Mammary epithelial cell (primary cell): ENCODE measurements at regions of chr16 and their contacts with region 1.

Region 1: DNA sequence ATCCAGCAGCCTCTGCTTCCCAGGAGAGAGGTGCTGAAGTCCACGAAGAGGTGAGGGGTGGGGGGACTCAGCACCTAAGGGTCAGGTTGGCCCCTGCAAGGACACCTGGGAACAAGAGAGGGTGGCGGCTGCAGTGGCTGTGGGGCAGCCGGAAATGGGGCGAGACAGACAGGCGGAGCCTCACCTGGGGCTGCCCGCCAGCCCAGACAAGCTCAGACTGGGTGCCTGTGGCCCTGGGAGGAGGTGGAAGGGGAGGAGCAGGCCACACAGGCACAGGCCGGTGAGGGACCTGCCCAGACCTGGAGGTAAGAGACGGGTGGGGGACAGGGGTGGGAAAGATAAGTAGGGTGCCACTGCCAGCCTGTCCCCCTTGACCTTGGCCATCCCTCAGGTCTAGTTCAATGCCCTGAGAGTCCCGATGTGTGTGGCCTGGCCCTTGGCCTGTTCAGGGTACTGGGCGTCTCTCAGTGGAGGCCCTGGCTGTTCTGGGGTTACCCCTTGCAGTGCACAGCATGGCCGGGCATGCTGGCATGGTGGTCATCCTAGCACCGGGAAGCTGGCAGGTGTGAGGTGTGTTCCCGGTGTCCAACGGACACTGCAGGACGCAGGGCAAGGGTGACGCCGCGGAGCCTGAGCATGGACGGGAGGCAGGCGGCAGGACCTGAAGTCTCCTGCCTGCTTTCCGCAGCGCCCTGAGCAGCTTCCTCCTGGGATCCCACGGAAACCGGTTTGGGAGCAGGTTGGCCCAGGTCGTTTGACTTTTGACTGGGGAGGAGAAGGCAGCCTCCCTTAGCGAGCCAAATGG is 8.4 kb upstream of the ADGRG1 start:
- DNase-seq: peak; percentile 91
- H3K4me3 ChIP-seq: peak overlapping the region; percentile 41 to 80 (median 77)
- H3K27ac ChIP-seq: peak overlapping the region; percentile 73
- H3K4me1 ChIP-seq: peaks cover 67% of the 10 kb centered on the region
- H3K27me3 ChIP-seq: no peaks in the 10 kb centered on the region
- CTCF ChIP-seq: peak in 1 of 2 donors; percentile 1

Region 2: GRCh38 chr16:57751539-57752202 is 131.6 kb after region 1 on chr16:
- CTCF ChIA-PET with region 1: interaction called, 17 read pairs
- dilution Hi-C with region 1: no loop called
- in situ Hi-C with region 1: no loop called
- intact Hi-C with region 1: no loop called
- DNase-seq: no peak
- H3K4me3 ChIP-seq: no peak overlapping the region
- H3K27ac ChIP-seq: no peak overlapping the region
- H3K4me1 ChIP-seq: no peaks in the 10 kb centered on the region
- H3K27me3 ChIP-seq: no peaks in the 10 kb centered on the region
- CTCF ChIP-seq: no peak